ENCODE measurements at regions of chr3 and their contacts with region 1.

Region 1: GRCh38 chr3:15268033-15268631 is 62.1 kb downstream of the CAPN7 start:
- DNase-seq: peak; percentile 86
- H3K4me3 ChIP-seq: peak overlapping the region in 1 of 2 experiments; percentile 21; a peak in 1 of 4 replicates
- H3K27ac ChIP-seq: no peak overlapping the region; a peak in 1 of 4 replicates
- H3K4me1 ChIP-seq: peaks cover 0 to 20% of the 10 kb centered on the region in 2 experiments; a peak in 3 of 4 replicates
- H3K27me3 ChIP-seq: no peaks in the 10 kb centered on the region
- CTCF ChIP-seq: peak; percentile 97
- EP300 ChIP-seq: no peak
- RAD21 ChIP-seq: peak; percentile 99

Region 2: DNA sequence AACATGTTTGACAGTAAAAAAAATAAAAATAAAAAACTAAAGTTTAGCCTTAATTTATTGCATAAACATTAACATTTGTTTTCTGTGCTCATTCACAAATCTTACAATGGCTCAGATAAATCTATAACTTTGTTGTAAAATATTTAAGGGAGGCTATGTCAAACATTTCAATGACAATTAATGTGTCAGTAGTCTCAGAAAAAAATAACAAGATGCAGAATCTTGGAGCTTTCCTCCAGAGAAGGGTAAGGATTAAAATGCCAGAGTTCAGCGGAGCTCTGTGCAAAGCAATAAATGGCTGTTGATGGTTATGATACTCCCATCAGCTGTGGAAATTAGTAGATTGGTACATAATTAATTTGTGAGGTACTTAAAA is 82.0 kb before region 1 on chr3:
- CTCF ChIA-PET with region 1: no interaction called
- POLR2A ChIA-PET with region 1: no interaction called
- DNase-seq: no peak
- H3K4me3 ChIP-seq: no peak overlapping the region
- H3K27ac ChIP-seq: no peak overlapping the region
- H3K4me1 ChIP-seq: no peaks in the 10 kb centered on the region
- H3K27me3 ChIP-seq: no peaks in the 10 kb centered on the region; the same call in 1 of the 2 replicates
- CTCF ChIP-seq: no peak
- EP300 ChIP-seq: no peak
- RAD21 ChIP-seq: no peak

Region 3: DNA sequence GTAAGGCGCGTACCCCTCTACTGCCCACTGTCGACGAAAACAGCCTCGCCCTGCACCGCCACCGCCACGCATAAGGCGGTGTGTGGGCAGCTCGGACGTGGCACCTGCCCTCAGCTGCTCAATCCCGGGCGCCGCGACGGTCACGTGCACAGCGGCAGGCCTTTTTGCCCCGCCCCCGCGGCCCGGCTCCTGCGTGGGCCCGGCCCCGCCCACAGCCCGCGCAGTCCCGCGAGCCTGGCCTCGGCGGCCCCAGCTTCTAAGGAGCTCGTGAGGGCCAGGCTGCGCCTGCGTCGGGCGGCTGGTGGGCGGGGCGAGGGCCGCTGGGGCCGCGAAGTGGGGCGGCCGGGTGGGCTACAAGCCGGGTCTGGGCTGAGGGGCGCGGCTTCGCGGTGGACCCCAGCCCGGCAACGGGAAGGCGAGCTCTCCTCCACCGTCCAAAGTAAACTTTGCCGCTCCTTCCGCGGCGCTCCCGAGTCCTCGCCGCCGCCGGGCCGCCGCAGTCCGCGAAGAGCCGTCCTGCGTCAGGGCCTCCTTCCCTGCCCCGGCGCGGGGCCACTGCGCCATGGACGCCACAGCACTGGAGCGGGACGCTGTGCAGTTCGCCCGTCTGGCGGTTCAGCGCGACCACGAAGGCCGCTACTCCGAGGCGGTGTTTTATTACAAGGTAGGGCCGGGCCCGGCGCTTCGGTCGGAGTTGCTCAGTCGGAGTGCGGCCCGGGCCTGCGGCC is 62.0 kb before region 1 on chr3 and contains the start of gene CAPN7:
- CTCF ChIA-PET with region 1: interaction called, 16 read pairs
- POLR2A ChIA-PET with region 1: no interaction called
- DNase-seq: peak; percentile 98
- H3K4me3 ChIP-seq: peak within 1 kb of the TSS; percentile 87 to 92
- H3K27ac ChIP-seq: peak within 1 kb of the TSS; percentile 83 to 92
- H3K4me1 ChIP-seq: peaks cover 0 to 13% of the 10 kb centered on the region in 2 experiments; a peak in 3 of 4 replicates
- H3K27me3 ChIP-seq: no peaks in the 10 kb centered on the region
- CTCF ChIP-seq: peak; percentile 53
- EP300 ChIP-seq: no peak
- RAD21 ChIP-seq: no peak
- polyA plus RNA-seq, gene CAPN7: 7.3 and 11.1 TPM in 2 replicates

Region 4: DNA sequence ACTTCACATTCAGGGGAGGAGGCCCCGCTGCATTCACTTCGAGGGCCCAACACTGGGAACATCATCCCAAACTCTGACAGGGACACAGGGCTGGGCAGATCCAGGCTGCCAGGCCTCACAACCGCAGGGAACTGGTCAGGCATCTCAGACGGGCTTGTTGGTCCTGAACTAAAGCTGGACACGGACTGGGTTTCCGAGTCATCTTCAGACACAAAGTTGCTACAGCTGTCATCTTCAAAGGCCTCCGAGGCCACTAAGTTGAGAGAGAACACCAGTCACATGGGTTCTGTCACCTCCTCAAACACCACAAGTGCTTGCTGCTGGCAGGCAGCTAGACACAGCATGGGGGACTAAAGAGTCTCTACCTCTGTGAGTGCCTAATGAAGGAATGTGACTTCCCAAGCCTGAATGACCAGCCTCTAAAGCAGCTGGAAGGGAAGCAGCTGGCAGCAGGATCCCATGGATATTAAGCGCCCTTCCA is 11.2 kb before region 1 on chr3:
- CTCF ChIA-PET with region 1: interaction called, 19 read pairs
- POLR2A ChIA-PET with region 1: no interaction called
- DNase-seq: no peak
- H3K4me3 ChIP-seq: no peak overlapping the region
- H3K27ac ChIP-seq: no peak overlapping the region
- H3K4me1 ChIP-seq: peaks cover 0 to under 1% of the 10 kb centered on the region in 2 experiments; a peak in 1 of 4 replicates
- H3K27me3 ChIP-seq: no peaks in the 10 kb centered on the region
- CTCF ChIP-seq: no peak
- EP300 ChIP-seq: no peak
- RAD21 ChIP-seq: no peak

Region 5: GRCh38 chr3:15307580-15307979 is 39.4 kb after region 1 on chr3:
- CTCF ChIA-PET with region 1: interaction called, 10 read pairs
- POLR2A ChIA-PET with region 1: no interaction called
- DNase-seq: no peak
- H3K4me3 ChIP-seq: no peak overlapping the region
- H3K27ac ChIP-seq: no peak overlapping the region
- H3K4me1 ChIP-seq: peaks cover 4 to 24% of the 10 kb centered on the region in 2 experiments; a peak in 3 of 4 replicates
- H3K27me3 ChIP-seq: no peaks in the 10 kb centered on the region
- CTCF ChIP-seq: no peak
- EP300 ChIP-seq: no peak
- RAD21 ChIP-seq: no peak

Region 6: DNA sequence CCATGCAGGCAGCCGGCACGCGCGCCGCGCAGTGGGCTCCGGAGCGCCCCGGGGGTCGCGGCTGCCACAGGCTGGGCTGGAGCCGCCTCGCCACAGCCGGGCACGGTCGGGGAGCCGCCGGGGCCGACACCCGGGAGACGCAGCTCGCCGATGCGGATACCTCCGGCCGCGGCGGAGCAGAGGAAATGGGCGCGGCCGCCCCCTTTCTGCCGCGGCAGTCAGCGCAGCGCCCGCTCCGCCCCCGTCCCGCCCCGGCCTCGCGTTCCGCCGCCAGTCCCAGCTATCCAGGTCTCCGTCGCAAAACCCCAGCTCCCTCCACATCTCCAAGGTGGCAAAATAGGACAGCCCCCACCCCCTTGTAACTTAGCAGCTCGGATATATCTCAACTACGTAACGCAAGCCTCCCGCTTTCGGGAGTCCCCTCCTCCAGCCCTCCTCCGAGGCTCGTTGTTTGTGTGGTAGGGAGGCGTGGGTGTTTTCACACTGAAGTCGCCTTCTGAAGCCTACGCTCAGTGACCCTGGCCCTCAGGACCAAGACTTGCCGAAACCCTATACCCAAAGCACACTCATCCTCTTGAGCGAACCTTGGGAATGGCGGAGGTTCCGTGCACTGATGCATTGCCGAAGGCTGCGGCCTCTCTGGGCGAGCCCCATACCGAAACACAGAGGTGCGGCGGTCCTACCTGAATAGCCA is 64.4 kb after region 1 on chr3 and contains the start of gene SH3BP5:
- CTCF ChIA-PET with region 1: interaction called, 59 read pairs
- POLR2A ChIA-PET with region 1: no interaction called
- DNase-seq: peak; percentile 93
- H3K4me3 ChIP-seq: peak within 1 kb of the TSS; percentile 79 to 91
- H3K27ac ChIP-seq: peak within 1 kb of the TSS; percentile 25 to 39; a peak in 2 of 4 replicates
- H3K4me1 ChIP-seq: peaks cover 7 to 11% of the 10 kb centered on the region in 2 experiments; a peak in 2 of 4 replicates
- H3K27me3 ChIP-seq: no peaks in the 10 kb centered on the region
- CTCF ChIP-seq: peak; percentile 55
- EP300 ChIP-seq: no peak
- RAD21 ChIP-seq: peak; percentile 44; the same call in 1 of the 2 replicates
- polyA plus RNA-seq, gene SH3BP5: 29.5 and 32.3 TPM in 2 replicates

Region 7: DNA sequence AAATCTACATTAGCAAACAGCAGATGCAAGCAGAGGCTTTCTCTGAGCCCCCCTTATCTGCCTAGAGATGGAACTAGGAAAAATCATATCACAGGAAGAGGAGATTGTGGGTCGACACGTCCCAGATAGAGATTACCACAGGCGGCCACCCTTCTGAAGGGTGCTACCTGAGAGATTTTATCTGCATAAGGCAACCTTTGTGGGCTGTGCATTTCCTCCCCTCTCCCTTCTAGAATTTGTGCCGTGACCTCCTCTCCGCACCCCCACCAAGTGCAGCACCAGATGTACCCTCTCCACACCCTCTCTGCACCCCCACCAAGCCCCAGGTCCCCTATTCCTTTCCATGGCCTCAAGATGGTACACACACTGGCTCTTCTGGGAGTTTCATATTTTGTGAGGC is 131.8 kb after region 1 on chr3:
- CTCF ChIA-PET with region 1: interaction called, 85 read pairs
- POLR2A ChIA-PET with region 1: no interaction called
- DNase-seq: no peak
- H3K4me3 ChIP-seq: no peak overlapping the region
- H3K27ac ChIP-seq: no peak overlapping the region
- H3K4me1 ChIP-seq: no peaks in the 10 kb centered on the region
- H3K27me3 ChIP-seq: no peaks in the 10 kb centered on the region
- CTCF ChIP-seq: no peak
- EP300 ChIP-seq: no peak
- RAD21 ChIP-seq: no peak

Region 8: GRCh38 chr3:15557511-15557946 is 289.4 kb after region 1 on chr3:
- CTCF ChIA-PET with region 1: interaction called, 59 read pairs
- POLR2A ChIA-PET with region 1: no interaction called
- DNase-seq: peak; percentile 58
- H3K4me3 ChIP-seq: no peak overlapping the region
- H3K27ac ChIP-seq: 0 out of 4 replicates have a peak overlapping the region, but pooled peaks of 1 of the 2 experiments have one; percentile 7
- H3K4me1 ChIP-seq: no peaks in the 10 kb centered on the region
- H3K27me3 ChIP-seq: no peaks in the 10 kb centered on the region
- CTCF ChIP-seq: peak; percentile 77
- EP300 ChIP-seq: no peak
- RAD21 ChIP-seq: peak; percentile 82

Measured in SK-N-SH (cell line).